ENCODE measurements at regions of chr22 and their contacts with region 1.

Region 1: GRCh38 chr22:33202455-33202854 is 144.3 kb upstream of the SYN3 start:
- DNase-seq: no peak
- H3K4me3 ChIP-seq: no peak overlapping the region
- H3K27ac ChIP-seq: no peak overlapping the region
- H3K27me3 ChIP-seq: no peaks in the 10 kb centered on the region
- CTCF ChIP-seq: no peak

Region 2: GRCh38 chr22:33018232-33018864 is 184.1 kb before region 1 on chr22:
- intact Hi-C with region 1: loop called (anchors 5 kb)
- DNase-seq: peak in 9 of 10 donors; percentile 29 to 74 (median 60)
- H3K4me3 ChIP-seq: no peak overlapping the region
- H3K27ac ChIP-seq: no peak overlapping the region
- H3K27me3 ChIP-seq: no peaks in the 10 kb centered on the region
- CTCF ChIP-seq: peak; percentile 63 to 95 (median 86)

Region 3: DNA sequence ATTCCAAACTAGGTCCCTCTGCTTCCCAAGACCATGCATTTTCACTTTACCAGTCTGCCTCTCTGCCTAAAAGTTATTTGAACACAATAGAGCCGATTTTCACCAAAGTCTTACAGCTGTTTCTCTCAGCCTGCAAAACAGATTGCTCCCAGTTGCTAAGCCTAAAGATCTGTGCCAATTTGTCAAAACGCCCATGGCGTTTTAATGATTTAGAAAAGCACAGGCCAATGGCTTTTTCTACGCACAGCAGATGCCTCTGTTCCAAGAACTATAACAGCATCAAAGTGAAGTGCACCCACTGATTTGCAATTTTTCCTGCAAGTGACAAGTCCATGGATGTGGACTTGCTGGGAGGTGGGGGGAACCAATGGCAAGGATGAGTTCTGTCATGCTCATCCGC is 29.6 kb after region 1 on chr22:
- intact Hi-C with region 1: no loop called
- DNase-seq: peak in 1 of 10 donors; percentile 16
- H3K4me3 ChIP-seq: no peak overlapping the region
- H3K27ac ChIP-seq: no peak overlapping the region
- H3K27me3 ChIP-seq: no peaks in the 10 kb centered on the region
- CTCF ChIP-seq: no peak

Region 4: DNA sequence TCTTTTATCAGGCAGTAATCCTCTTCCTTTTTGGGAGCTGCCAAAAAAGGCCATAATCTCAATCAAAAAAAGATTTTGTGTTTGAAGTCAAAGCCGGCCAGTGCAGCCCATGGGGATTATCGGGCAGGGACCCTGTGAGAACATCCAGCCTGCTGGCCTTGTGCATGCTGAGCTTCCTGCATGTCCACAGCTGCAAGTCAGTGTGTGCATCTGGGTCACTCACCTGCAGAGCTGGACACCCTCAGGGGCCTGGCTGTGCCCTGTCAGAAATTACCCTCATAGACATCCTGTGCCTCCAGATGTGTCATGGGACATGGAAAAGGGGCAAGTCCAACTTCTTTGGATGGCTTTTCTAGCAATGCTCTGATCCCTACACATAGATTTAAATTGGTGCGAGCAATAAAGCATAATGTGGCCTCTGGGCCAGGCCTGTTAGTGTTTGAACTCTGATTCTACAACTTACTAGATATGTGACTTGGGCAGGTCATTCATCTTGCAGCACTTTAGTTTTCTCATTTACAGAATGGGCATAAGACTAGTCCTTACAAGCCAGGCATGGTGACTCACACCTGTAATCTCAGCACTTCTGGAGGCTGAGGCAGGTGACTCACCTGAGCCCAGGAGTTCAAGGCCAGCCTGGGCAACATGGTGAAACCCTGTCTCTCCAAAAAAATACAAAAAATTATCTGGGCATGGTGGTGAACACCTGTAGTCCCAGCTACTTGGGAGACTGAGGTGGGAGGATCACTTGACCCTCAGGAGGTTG is 799.4 kb after region 1 on chr22:
- intact Hi-C with region 1: no loop called
- DNase-seq: no peak
- H3K4me3 ChIP-seq: no peak overlapping the region
- H3K27ac ChIP-seq: no peak overlapping the region
- H3K27me3 ChIP-seq: no peaks in the 10 kb centered on the region
- CTCF ChIP-seq: no peak